ENCODE measurements at regions of chr2 and their contacts with region 1.

Region 1: DNA sequence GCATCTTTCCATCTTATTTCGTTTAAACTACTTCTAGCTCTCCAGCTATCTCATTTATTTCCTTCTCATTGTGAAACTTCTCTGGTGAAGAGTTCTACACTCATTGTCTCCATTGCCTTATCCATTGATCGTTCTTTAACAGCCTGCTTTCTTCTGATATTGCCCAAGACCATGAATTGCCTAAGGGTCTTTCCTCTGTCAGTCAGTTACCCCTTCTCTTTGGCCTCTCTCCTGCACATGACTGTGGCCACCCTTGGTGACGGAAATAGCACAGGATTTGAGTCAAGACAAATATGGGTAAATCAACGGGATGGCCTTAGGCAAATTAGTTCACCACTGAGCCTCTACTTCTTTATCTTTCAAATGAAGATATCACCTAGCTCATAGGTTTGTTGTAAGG is 26.6 kb downstream of the NHEJ1 start:
- DNase-seq: no peak
- ATAC-seq: no peak
- H3K4me3 ChIP-seq: no peak overlapping the region
- H3K27ac ChIP-seq: no peak overlapping the region
- H3K4me1 ChIP-seq: peaks cover 0 to 6% (median 0%) of the 10 kb centered on the region in 9 donors
- H3K27me3 ChIP-seq: no peaks in the 10 kb centered on the region
- CTCF ChIP-seq: no peak

Region 2: DNA sequence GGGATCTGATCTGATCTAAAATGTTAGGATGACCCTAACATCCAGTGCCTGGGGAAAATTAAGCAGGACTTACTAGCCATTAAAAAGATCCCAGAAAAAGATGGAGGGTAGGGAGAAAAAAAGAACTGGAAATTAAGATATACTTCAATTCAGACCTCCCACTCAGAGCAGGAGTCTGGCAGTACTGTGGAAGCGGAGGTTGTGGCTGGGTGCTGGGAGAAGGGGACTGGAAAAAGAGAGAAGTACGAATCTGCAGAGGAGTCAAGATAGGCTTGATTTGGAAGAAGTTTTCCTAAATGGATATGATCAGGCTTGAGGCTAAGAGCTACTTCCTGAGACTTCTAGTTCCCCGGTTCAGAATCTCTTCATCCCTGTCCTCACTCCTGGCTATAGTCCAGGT is 39.8 kb before region 1 on chr2:
- intact Hi-C with region 1: loop called in 1 of 10 experiments (anchors 1 kb)
- DNase-seq: no peak
- ATAC-seq: no peak
- H3K4me3 ChIP-seq: no peak overlapping the region
- H3K27ac ChIP-seq: no peak overlapping the region
- H3K4me1 ChIP-seq: peaks cover 0 to 11% (median 0%) of the 10 kb centered on the region in 9 donors
- H3K27me3 ChIP-seq: no peaks in the 10 kb centered on the region
- CTCF ChIP-seq: no peak

Measured in heart right ventricle (tissue), 16 donors.